ENCODE measurements at regions of chr1 and their contacts with region 1.

Region 1: DNA sequence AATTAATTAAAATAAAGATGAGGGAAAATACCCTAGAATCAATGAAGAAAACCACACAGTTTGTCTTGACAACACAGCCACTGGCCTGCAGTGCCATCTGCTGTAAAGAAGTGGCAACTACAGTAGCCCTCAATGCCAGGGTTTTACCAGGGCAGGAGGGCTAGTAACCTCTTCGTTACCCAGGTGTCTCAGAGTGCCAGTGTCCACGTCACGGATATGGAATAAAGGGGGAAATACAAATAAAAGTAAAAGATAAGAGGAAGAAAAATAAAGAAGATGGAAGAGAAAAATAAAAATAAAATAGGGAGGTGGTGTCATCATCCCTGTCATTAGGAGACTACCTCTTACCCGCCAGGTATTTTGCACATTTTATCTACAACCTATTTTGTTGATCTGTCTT is 14.2 kb upstream of the SLC44A3 start:
- DNase-seq: peak; percentile 30
- H3K4me3 Mint-ChIP-seq: no peak overlapping the region
- H3K27ac Mint-ChIP-seq: no peak overlapping the region
- H3K4me1 Mint-ChIP-seq: peaks cover 15% of the 10 kb centered on the region
- H3K27me3 Mint-ChIP-seq: peaks cover 2% of the 10 kb centered on the region

Region 2: DNA sequence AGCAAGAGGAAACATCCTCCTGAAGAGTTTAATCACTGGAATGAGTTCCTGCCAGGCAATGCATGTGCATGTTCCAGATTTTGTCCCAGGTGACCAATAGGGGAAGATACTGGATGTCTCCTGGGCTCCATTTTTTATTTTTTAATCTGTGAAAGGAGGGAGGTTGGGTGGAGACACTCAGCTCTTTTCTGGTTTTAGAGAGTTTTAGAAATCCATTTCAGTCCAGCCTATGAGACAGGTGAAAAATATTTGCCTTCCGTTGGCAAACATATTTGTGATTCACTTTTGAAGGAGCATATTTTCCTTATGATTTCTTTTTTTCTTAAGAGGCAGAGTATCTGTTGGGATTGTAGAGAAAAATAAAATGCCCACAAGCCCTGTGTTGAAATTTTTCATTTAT is 755.7 kb before region 1 on chr1:
- intact Hi-C with region 1: loop called (anchors 5 kb)
- DNase-seq: no peak
- H3K4me3 Mint-ChIP-seq: no peak overlapping the region
- H3K27ac Mint-ChIP-seq: no peak overlapping the region
- H3K4me1 Mint-ChIP-seq: peaks cover 3% of the 10 kb centered on the region
- H3K27me3 Mint-ChIP-seq: peaks cover 19% of the 10 kb centered on the region

Region 3: GRCh38 chr1:94481473-94481933 is 324.4 kb before region 1 on chr1:
- intact Hi-C with region 1: loop called (anchors 1 kb)
- DNase-seq: peak; percentile 11
- H3K4me3 Mint-ChIP-seq: no peak overlapping the region
- H3K27ac Mint-ChIP-seq: no peak overlapping the region
- H3K4me1 Mint-ChIP-seq: peaks cover 6% of the 10 kb centered on the region
- H3K27me3 Mint-ChIP-seq: no peaks in the 10 kb centered on the region

Region 4: GRCh38 chr1:94522304-94522703 is 283.6 kb before region 1 on chr1:
- intact Hi-C with region 1: loop called (anchors 5 kb)
- DNase-seq: no peak
- H3K4me3 Mint-ChIP-seq: no peak overlapping the region
- H3K27ac Mint-ChIP-seq: no peak overlapping the region
- H3K4me1 Mint-ChIP-seq: no peaks in the 10 kb centered on the region
- H3K27me3 Mint-ChIP-seq: peaks cover 6% of the 10 kb centered on the region

Region 5: GRCh38 chr1:94734963-94735899 is 70.7 kb before region 1 on chr1:
- intact Hi-C with region 1: no loop called
- DNase-seq: no peak
- H3K4me3 Mint-ChIP-seq: no peak overlapping the region
- H3K27ac Mint-ChIP-seq: no peak overlapping the region
- H3K4me1 Mint-ChIP-seq: peaks cover 19% of the 10 kb centered on the region
- H3K27me3 Mint-ChIP-seq: peaks cover 20% of the 10 kb centered on the region

Measured in activated T-helper 2 cell treated with anti-CD3 and anti-CD28 coated beads, Interferon-gamma antibody, Interleukin-2, Interleukin-4, amounts not matched to agents 10 μg/mL and 5 μg/mL and 100 μg/mL, durations not matched to agents 14 hours and 24 hours and 36 hours (primary cell).